Panc1 (cell line): ENCODE measurements at regions of chr2 and their contacts with region 1.

Region 1: DNA sequence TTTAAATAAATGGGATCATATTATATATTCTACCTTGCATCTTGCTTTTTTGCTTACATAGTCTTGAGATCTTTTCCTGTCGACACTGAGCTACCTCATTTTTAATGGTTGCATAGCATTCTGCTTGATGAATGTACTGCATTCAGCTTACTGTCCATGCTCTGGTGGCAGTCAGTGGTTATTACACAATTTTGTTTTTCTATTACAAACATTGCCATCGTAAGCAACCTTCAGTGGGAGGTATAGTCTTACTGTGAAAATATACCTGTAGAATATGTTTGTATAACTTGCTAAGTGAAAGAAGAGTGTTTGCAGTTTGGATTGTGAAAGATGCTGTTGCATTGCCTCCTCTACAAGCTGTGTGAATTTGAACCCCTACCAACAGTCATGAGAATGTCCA is 43.4 kb downstream of the UBXN4 start:
- DNase-seq: no peak
- ATAC-seq: 0 out of 2 replicates have a peak, but pooled peaks have one; percentile 51
- H3K4me3 ChIP-seq: no peak overlapping the region
- H3K27ac ChIP-seq: no peak overlapping the region
- H3K4me1 ChIP-seq: no peaks in the 10 kb centered on the region
- H3K27me3 ChIP-seq: no peaks in the 10 kb centered on the region
- CTCF ChIP-seq: no peak

Region 2: DNA sequence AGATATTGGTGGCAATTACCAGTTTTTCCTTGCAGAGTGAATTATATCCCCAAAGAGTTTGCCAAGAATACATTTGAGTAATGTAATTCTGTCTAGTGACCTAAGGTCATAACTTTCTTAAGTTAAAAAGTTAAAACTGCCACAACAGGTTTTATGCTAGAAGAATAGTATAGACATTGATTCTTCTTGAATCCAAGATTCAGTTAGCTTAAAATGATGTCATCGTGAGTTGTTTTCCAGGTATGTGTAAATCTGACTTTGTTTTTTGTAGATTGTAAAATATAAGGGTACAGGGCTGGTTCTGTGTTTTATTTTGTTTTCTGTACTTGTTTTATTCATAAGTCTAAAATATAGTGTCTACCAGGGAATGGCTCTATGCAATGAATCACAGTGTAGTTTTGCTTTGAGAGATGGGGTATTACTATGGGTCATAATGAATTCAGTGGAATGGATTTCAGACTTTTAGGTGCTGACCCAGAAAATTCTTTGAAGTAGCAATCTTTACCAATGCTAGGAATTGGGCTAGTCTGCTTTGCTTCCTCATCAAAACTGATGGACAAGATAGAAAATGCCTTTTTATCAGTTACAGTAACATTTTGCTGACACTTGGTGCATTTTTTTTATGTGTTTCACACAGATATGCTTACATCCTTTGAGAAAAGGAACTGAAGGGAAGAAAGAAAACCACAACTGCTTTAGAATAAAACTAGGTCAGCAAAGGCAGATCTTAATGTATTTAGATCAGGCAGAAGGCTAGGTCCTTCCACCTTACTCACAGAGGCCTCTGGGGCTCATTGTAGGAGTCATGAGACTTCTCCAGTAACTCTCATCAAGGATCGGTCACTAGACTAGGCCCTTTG is 1551.9 kb before region 1 on chr2:
- CTCF ChIA-PET with region 1: no interaction called
- POLR2A ChIA-PET with region 1: no interaction called
- in situ Hi-C with region 1: no loop called
- intact Hi-C with region 1: no loop called
- DNase-seq: no peak
- ATAC-seq: no peak
- H3K4me3 ChIP-seq: no peak overlapping the region
- H3K27ac ChIP-seq: no peak overlapping the region
- H3K4me1 ChIP-seq: no peaks in the 10 kb centered on the region
- H3K27me3 ChIP-seq: no peaks in the 10 kb centered on the region
- CTCF ChIP-seq: no peak

Region 3: DNA sequence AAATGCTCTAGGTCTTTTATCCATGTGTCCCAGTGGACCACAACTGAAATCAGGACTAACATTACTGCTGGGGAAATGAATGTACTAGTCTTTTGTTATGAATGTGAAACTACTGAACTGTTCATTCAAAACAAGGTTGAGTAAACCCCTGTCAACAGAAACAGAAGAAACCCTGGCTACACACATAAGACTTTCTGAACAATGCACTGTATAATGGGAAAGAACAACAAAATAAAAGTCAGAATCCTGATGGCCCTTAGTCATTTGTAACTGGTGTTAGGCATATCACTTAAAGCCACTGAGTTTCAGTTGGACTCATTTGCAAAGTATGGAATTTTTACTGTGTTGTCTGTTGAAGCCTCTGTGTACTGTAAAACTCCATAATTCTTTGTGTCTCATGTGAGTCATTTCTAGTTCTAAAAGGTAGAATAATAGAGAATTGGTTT is 120.4 kb before region 1 on chr2:
- CTCF ChIA-PET with region 1: no interaction called
- POLR2A ChIA-PET with region 1: no interaction called
- in situ Hi-C with region 1: no loop called
- intact Hi-C with region 1: no loop called
- DNase-seq: no peak
- ATAC-seq: peak; percentile 68
- H3K4me3 ChIP-seq: no peak overlapping the region
- H3K27ac ChIP-seq: 0 out of 2 replicates have a peak overlapping the region, but pooled peaks have one; percentile 7
- H3K4me1 ChIP-seq: no peaks in the 10 kb centered on the region; the same call in 1 of the 2 replicates
- H3K27me3 ChIP-seq: no peaks in the 10 kb centered on the region
- CTCF ChIP-seq: no peak

Region 4: DNA sequence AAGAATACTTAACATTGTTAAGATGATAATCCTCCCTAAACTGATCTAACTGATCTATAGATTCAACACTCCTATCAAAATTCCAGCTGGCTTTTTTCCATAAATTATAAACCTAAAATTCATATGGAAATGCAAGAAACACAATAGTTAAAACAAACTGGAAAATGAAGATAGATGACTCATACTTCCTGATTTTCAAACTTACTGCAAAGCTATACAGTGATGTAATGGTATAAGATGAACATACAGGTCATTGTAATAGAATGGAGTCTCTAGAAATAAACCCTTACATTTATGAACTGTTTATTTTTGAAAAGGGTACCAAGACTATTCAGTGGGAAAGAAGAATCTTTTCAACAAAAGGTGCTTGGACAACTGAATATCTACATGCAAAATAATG is 11.1 kb before region 1 on chr2:
- CTCF ChIA-PET with region 1: no interaction called
- POLR2A ChIA-PET with region 1: interaction called, 11 read pairs
- in situ Hi-C with region 1: no loop called
- intact Hi-C with region 1: no loop called
- DNase-seq: no peak
- ATAC-seq: no peak
- H3K4me3 ChIP-seq: no peak overlapping the region
- H3K27ac ChIP-seq: no peak overlapping the region
- H3K4me1 ChIP-seq: no peaks in the 10 kb centered on the region
- H3K27me3 ChIP-seq: no peaks in the 10 kb centered on the region
- CTCF ChIP-seq: no peak